AG04449 (cell line): ENCODE measurements at regions of chr2 and their contacts with region 1.

Region 1: GRCh38 chr2:68994864-68995263 is 18.1 kb upstream of the ANTXR1 start:
- DNase-seq: no peak
- H3K4me3 ChIP-seq: no peak overlapping the region
- CTCF ChIP-seq: no peak

Region 2: GRCh38 chr2:68971591-68972231 is 23.2 kb before region 1 on chr2:
- CTCF ChIA-PET with region 1: interaction called, 14 read pairs
- POLR2A ChIA-PET with region 1: no interaction called
- DNase-seq: peak; percentile 99
- H3K4me3 ChIP-seq: no peak overlapping the region
- CTCF ChIP-seq: no peak